PC-3 (cell line): ENCODE measurements at regions of chr2 and their contacts with region 1.

Region 1: DNA sequence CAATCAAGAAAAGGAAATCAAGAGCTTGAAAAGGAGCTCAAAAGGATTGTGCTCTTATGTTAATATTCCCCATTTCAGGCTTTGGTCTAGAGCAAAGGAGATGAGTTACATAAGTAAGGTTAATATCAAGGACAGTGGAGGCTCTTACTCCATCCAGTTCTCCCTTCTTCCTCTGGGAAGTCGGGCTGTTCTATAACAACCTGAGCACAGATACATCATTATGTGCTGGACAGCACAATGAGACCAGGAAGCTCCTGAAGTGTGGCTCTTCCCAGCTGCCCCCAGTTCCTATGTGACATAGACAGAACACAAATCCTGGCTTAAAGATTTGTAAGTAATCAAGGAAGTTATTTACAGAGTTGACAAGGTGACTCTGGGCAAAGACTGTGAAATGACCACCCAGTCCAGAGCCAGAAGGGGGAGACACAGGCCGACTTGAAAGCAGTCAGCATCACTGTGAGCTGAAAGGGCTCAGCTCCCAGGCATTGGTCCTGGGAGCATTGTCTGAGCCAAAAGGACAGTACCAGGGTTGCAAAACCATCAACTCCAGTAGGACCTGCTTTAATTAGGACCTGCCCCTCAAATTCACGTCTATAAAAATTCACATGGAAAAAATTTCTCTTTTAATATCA is 917.6 kb upstream of the ACVR2A start:
- DNase-seq: peak; percentile 73
- ATAC-seq: peak; percentile 97
- H3K4me3 ChIP-seq: no peak overlapping the region
- H3K27ac ChIP-seq: no peak overlapping the region
- H3K4me1 ChIP-seq: no peaks in the 10 kb centered on the region
- H3K27me3 ChIP-seq: no peaks in the 10 kb centered on the region
- CTCF ChIP-seq: peak; percentile 83

Region 2: DNA sequence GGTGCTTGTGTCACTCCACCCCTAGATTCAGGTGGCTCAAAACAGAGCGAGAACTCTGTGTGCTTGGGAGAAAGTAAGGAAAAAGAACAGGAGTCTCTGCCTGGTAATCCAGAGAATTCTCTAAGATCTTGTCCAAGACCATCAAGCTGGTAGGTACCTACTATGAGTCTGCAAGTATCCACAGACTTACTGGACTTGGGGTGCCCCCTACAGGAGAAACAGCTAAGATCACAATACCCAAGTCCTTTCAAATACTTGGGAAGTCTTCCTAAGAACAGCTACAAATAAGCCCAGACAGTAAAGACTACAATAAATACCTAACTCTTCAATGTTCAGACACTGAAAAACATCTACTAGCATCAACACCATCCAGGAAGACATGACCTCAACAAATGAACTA is 226.0 kb before region 1 on chr2:
- CTCF ChIA-PET with region 1: no interaction called
- POLR2A ChIA-PET with region 1: no interaction called
- intact Hi-C with region 1: no loop called
- DNase-seq: peak; percentile 46
- ATAC-seq: no peak
- H3K4me3 ChIP-seq: no peak overlapping the region
- H3K27ac ChIP-seq: no peak overlapping the region
- H3K4me1 ChIP-seq: no peaks in the 10 kb centered on the region
- H3K27me3 ChIP-seq: no peaks in the 10 kb centered on the region
- CTCF ChIP-seq: peak; percentile 54

Region 3: GRCh38 chr2:146821836-146822316 is 105.3 kb before region 1 on chr2:
- CTCF ChIA-PET with region 1: no interaction called
- POLR2A ChIA-PET with region 1: no interaction called
- intact Hi-C with region 1: loop called (anchors 2 kb)
- DNase-seq: peak; percentile 65
- ATAC-seq: peak; percentile 75
- H3K4me3 ChIP-seq: peak overlapping the region; percentile 4; the same call in 1 of the 2 replicates
- H3K27ac ChIP-seq: peak overlapping the region; percentile 49
- H3K4me1 ChIP-seq: peaks cover 54% of the 10 kb centered on the region
- H3K27me3 ChIP-seq: no peaks in the 10 kb centered on the region
- CTCF ChIP-seq: no peak

Region 4: GRCh38 chr2:147002256-147002655 is 75.1 kb after region 1 on chr2:
- CTCF ChIA-PET with region 1: no interaction called
- POLR2A ChIA-PET with region 1: no interaction called
- intact Hi-C with region 1: no loop called
- DNase-seq: no peak
- ATAC-seq: no peak
- H3K4me3 ChIP-seq: no peak overlapping the region
- H3K27ac ChIP-seq: no peak overlapping the region
- H3K4me1 ChIP-seq: peaks cover 12% of the 10 kb centered on the region
- H3K27me3 ChIP-seq: no peaks in the 10 kb centered on the region
- CTCF ChIP-seq: no peak

Region 5: GRCh38 chr2:147045113-147045512 is 117.9 kb after region 1 on chr2:
- CTCF ChIA-PET with region 1: no interaction called
- POLR2A ChIA-PET with region 1: no interaction called
- intact Hi-C with region 1: loop called (anchors 2 kb)
- DNase-seq: peak; percentile 79
- ATAC-seq: peak; percentile 68
- H3K4me3 ChIP-seq: no peak overlapping the region
- H3K27ac ChIP-seq: no peak overlapping the region
- H3K4me1 ChIP-seq: peaks cover 5% of the 10 kb centered on the region
- H3K27me3 ChIP-seq: no peaks in the 10 kb centered on the region
- CTCF ChIP-seq: peak; percentile 89

Region 6: GRCh38 chr2:147135376-147135775 is 208.2 kb after region 1 on chr2:
- CTCF ChIA-PET with region 1: no interaction called
- POLR2A ChIA-PET with region 1: no interaction called
- intact Hi-C with region 1: loop called (anchors 10 kb)
- DNase-seq: no peak
- ATAC-seq: no peak
- H3K4me3 ChIP-seq: no peak overlapping the region
- H3K27ac ChIP-seq: no peak overlapping the region
- H3K4me1 ChIP-seq: peaks cover 27% of the 10 kb centered on the region
- H3K27me3 ChIP-seq: no peaks in the 10 kb centered on the region
- CTCF ChIP-seq: no peak

Region 7: DNA sequence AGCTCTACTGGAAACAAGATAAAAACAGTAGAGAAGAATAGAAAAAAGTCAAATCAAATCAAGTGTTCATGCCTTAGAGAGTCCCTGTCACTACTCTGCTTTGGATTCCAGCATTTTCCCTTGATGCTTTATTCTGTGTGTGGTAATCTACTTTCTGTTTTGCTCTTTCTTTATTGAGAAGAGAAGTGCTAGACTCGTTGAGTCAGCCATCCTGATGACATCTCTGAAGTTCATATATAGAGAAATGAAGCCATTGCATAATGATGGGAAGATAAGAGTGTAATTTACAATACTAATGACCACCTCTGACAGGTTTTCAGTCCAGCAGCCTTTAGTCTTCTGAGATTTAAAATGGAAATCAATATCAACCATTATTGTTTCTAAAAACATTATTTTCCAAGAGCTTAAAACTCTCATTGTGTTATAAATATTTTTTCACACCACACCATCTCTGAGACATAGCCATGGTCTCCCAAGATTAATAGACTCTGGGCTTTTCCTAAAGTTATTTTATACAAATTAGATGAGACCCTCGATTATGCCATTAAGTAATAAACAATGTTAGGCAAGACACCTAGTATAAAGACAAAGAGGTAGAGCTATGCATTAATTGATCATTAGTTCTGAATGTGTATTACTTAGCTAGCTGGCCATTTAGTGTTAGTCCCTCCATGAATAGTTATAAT is 238.6 kb after region 1 on chr2:
- CTCF ChIA-PET with region 1: no interaction called
- POLR2A ChIA-PET with region 1: no interaction called
- intact Hi-C with region 1: no loop called
- DNase-seq: no peak
- ATAC-seq: no peak
- H3K4me3 ChIP-seq: no peak overlapping the region
- H3K27ac ChIP-seq: no peak overlapping the region
- H3K4me1 ChIP-seq: no peaks in the 10 kb centered on the region
- H3K27me3 ChIP-seq: no peaks in the 10 kb centered on the region
- CTCF ChIP-seq: no peak

Region 8: DNA sequence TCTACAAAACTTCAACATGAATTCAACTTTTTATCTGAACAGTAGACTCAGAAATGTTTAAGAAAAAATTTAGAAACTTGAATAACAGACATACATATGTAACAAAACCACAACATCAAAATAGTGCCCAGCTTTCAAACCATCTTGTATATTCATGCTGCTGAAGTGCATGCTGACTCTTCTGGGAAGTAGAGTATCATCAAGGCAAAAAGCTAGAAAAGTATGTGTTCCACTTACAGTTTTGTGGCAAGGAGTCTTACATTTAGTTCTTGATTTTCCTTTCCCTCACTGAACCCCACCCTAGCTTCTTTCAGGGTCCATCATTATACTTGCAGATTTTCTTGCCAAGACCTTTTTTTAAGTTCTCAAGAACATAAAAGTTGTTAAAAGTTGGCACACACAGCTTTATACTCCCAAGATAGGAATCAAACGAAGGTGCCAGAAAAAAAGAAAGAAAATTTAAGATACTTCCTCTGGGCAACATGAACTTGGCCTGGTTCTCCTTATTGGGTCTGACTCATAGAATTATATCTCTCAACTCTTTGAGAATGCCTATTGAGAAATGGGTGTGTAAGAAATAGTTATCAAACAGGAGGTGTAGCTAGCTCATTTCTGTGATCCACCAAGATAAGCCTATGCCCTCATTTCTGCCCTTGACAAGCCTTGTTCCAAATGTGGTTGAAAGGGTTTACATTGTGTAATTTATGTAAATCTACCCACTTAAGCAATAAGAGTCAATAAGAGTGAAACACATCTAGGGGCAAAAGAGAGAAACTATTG is 250.1 kb after region 1 on chr2:
- CTCF ChIA-PET with region 1: no interaction called
- POLR2A ChIA-PET with region 1: no interaction called
- intact Hi-C with region 1: no loop called
- DNase-seq: peak; percentile 75
- ATAC-seq: peak; percentile 65
- H3K4me3 ChIP-seq: no peak overlapping the region
- H3K27ac ChIP-seq: peak overlapping the region; percentile 70
- H3K4me1 ChIP-seq: peaks cover 38% of the 10 kb centered on the region
- H3K27me3 ChIP-seq: no peaks in the 10 kb centered on the region
- CTCF ChIP-seq: no peak